ENCODE measurements at regions of chr19 and their contacts with region 1.

Region 1: GRCh38 chr19:45439569-45440254 is 16.0 kb upstream of the ERCC1 start:
- DNase-seq: no peak
- ATAC-seq: peak; percentile 81
- H3K4me3 ChIP-seq: peak overlapping the region; percentile 57
- H3K27ac ChIP-seq: peak overlapping the region; percentile 82
- H3K4me1 ChIP-seq: peaks cover 18% of the 10 kb centered on the region
- H3K27me3 ChIP-seq: no peaks in the 10 kb centered on the region
- CTCF ChIP-seq: peak; percentile 67 to 95 (median 94)
- EP300 ChIP-seq: no peak
- POLR2A ChIP-seq: peak; percentile 59; the same call in 1 of the 2 replicates
- RAD21 ChIP-seq: peak; percentile 77

Region 2: DNA sequence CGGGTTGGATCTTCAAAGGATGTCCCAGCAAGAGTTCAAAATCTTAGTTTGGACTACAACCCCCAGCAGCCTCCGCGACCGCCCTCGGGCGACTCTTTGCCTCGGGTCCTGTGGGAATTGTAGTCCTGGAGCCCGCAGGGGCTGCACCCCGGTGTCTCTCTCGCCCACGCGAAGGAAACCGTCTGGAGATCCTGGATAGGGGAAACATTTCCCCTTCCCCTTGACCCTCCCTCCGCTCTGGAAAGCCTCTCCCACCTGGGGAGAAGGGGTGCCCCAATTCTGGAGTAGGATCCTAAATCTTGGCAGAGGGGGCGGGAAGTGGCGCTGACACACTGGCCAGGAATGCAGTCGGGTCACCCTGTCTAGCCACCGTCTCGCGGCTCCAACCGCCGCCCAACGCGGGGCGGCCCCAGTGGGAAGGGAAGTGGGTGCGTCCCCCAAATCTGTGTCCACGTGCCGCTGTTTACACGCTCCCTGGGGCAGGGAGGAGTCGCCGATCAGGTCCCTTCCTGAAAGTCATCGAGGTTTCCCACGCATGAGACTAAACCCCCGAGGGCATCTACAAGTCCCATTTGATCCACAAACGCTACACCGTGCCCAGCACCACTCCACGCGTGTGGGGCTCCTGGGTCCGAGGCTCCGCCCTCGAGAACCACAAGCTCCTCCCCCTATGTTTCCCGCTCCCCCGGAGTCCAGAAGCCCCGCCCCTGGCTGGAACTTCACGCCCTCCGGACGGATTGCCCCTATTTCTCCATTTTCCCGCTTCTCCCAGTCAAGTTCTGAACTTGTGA is 34.1 kb before region 1 on chr19:
- CTCF ChIA-PET with region 1: interaction called, 37 read pairs
- POLR2A ChIA-PET with region 1: interaction called, 3 read pairs
- RAD21 ChIA-PET with region 1: interaction called, 27 read pairs
- SMC1A ChIA-PET with region 1: interaction called, 9 read pairs
- in situ Hi-C with region 1: no loop called
- intact Hi-C with region 1: no loop called
- DNase-seq: peak; percentile 30
- ATAC-seq: peak; percentile 77
- H3K4me3 ChIP-seq: peak overlapping the region; percentile 98
- H3K27ac ChIP-seq: peak overlapping the region; percentile 89
- H3K4me1 ChIP-seq: peaks cover 4% of the 10 kb centered on the region
- H3K27me3 ChIP-seq: no peaks in the 10 kb centered on the region; a peak in 1 of 4 replicates
- CTCF ChIP-seq: no peak
- EP300 ChIP-seq: no peak
- POLR2A ChIP-seq: peak; percentile 45; the same call in 1 of the 2 replicates
- RAD21 ChIP-seq: no peak

Region 3: DNA sequence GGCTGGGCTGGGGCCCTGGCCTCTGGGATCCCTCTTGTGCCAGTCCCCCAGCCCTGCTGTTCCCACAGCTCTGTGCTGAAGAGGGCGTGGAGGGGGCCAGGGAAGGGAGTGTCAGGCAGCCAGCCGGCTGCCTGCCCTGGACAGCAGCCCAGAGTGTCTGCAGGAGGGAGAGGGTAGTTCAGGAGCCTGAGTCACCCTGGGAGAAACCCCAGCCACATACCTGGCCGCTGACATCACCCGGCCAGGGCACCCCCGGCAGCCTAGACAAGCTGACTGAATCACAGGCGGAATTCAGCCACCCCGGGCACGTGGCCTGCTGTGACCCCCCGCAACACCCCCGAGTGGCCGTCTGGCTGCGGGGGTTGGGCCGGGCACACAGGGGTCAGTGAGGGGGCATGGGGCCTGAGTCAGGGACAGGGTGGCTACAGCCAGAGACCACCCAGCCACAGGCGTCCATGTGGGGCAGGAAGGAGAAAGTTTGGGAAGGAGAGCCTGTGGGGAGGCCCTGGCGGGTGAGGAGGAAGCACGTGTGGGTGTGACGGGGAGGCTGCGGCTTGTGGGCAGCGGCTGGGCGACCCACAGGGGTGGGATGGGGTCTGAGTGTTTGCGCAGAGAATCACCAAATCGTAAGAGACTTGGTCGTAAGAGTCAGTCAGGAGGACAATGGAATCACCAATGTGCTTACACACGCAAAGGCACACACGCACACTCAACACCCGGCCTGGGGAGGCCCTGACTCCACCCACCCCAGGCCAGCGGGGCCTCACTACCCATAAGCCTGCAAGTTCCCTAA is 16.2 kb after region 1 on chr19:
- CTCF ChIA-PET with region 1: interaction called, 15 read pairs
- POLR2A ChIA-PET with region 1: interaction called, 3 read pairs
- RAD21 ChIA-PET with region 1: interaction called, 6 read pairs
- SMC1A ChIA-PET with region 1: interaction called, 10 read pairs
- in situ Hi-C with region 1: no loop called
- intact Hi-C with region 1: no loop called
- DNase-seq: no peak
- ATAC-seq: peak; percentile 86
- H3K4me3 ChIP-seq: no peak overlapping the region
- H3K27ac ChIP-seq: peak overlapping the region; percentile 33
- H3K4me1 ChIP-seq: peaks cover 33% of the 10 kb centered on the region
- H3K27me3 ChIP-seq: no peaks in the 10 kb centered on the region
- CTCF ChIP-seq: no peak
- EP300 ChIP-seq: no peak
- POLR2A ChIP-seq: no peak
- RAD21 ChIP-seq: no peak

Region 4: GRCh38 chr19:45478454-45479238 is 38.9 kb after region 1 on chr19:
- CTCF ChIA-PET with region 1: interaction called, 385 read pairs
- POLR2A ChIA-PET with region 1: interaction called, 30 read pairs
- RAD21 ChIA-PET with region 1: interaction called, 206 read pairs
- SMC1A ChIA-PET with region 1: interaction called, 145 read pairs
- in situ Hi-C with region 1: loop called (anchors 5 kb)
- intact Hi-C with region 1: loop called (anchors 1 kb)
- DNase-seq: peak; percentile 88
- ATAC-seq: peak; percentile 94
- H3K4me3 ChIP-seq: peak overlapping the region; percentile 72
- H3K27ac ChIP-seq: peak overlapping the region; percentile 98
- H3K4me1 ChIP-seq: peaks cover 5% of the 10 kb centered on the region
- H3K27me3 ChIP-seq: no peaks in the 10 kb centered on the region
- CTCF ChIP-seq: peak; percentile 94 to 98 (median 96)
- EP300 ChIP-seq: no peak
- POLR2A ChIP-seq: peak; percentile 74
- RAD21 ChIP-seq: peak; percentile 89

Region 5: DNA sequence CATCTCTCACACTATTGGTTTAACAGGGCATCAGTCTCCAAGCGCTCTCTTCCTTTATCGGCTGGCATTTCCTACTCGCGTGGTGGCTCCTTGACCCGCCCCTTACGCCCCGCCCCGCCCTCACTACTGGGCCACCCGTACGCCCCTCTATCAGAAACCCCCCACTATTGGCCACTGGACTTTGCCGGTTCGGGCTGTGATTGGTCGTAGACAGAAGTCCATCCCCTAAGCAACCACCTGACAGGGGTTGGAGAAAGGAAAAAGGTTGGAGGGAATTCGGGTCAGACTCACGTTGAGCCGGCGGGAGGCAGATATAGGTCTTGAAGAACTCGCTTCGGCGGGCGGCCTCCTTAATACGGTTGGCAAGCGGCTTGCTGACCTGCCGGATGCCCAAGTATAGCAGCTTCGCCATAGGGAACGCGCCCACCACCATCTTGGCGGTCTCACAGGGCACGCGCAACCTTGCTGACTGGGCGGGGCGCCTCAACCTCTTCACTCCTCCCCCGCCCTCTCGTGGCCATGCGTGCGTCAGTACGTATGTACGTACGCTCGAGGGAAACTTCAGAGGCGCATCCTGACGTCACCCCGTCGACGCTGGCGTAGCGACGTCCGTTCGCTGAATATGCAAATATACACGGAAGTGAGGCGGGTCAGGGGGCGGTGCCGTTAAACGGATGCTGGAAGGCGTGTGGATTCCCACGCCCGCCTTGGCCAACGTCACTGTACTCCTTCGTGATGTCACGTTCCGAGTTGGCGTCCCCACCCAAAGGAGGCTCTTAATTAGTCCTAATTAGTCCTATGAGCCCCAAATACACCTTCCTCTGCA is 144.8 kb after region 1 on chr19 and contains the start of gene OPA3:
- CTCF ChIA-PET with region 1: no interaction called
- POLR2A ChIA-PET with region 1: no interaction called
- RAD21 ChIA-PET with region 1: interaction called, 4 read pairs
- SMC1A ChIA-PET with region 1: no interaction called
- in situ Hi-C with region 1: no loop called
- intact Hi-C with region 1: loop called (anchors 5 kb)
- DNase-seq: peak; percentile 100
- ATAC-seq: peak; percentile 96
- H3K4me3 ChIP-seq: peak within 1 kb of the TSS; percentile 99
- H3K27ac ChIP-seq: peak within 1 kb of the TSS; percentile 85
- H3K4me1 ChIP-seq: peaks cover 6% of the 10 kb centered on the region; the same call in 1 of the 2 replicates
- H3K27me3 ChIP-seq: no peaks in the 10 kb centered on the region
- CTCF ChIP-seq: no peak
- EP300 ChIP-seq: peak in 1 of 2 experiments; percentile 58; a peak in 1 of 4 replicates
- POLR2A ChIP-seq: peak; percentile 93
- RAD21 ChIP-seq: no peak
- polyA plus RNA-seq, gene OPA3: 2.2 to 2.3 TPM